ENCODE measurements at regions of chr1 and their contacts with region 1.

Region 1: GRCh38 chr1:65075123-65075976 is 72.7 kb upstream of the AK4 start:
- DNase-seq: peak in 1 of 3 donors; percentile 57
- ATAC-seq: peak; percentile 80 to 81
- H3K4me3 ChIP-seq: no peak overlapping the region
- H3K27ac ChIP-seq: no peak overlapping the region
- H3K4me1 ChIP-seq: no peaks in the 10 kb centered on the region
- H3K27me3 ChIP-seq: no peaks in the 10 kb centered on the region

Region 2: DNA sequence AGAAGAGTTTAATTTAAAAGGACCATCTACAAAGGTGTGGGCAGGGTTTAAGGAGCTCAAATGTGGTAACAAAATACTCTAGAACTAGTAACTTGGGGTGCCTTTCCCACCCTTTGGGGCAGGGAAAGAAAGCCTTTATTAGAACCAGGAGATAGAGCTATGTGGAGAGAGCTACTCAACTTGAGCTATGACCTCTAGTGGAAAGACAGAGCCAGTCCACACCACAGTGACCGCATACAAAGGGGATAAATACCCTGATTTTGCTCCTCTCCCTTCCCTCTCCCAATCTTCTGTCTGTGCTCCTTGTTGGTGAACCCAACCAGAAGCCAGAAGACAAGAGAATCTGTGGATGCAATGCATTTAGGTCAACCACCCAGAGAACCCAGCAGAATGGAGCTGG is 54.6 kb before region 1 on chr1:
- intact Hi-C with region 1: no loop called
- DNase-seq: no peak
- ATAC-seq: peak; percentile 57 to 71
- H3K4me3 ChIP-seq: no peak overlapping the region
- H3K27ac ChIP-seq: no peak overlapping the region
- H3K4me1 ChIP-seq: peaks cover 1% of the 10 kb centered on the region
- H3K27me3 ChIP-seq: no peaks in the 10 kb centered on the region

Region 3: GRCh38 chr1:65148548-65149350 is 73.4 kb after region 1 on chr1:
- intact Hi-C with region 1: loop called in 2 of 4 experiments (anchors 10 kb)
- DNase-seq: peak; percentile 60 to 82 (median 81)
- ATAC-seq: peak; percentile 80 to 82
- H3K4me3 ChIP-seq: peak overlapping the region; percentile 63
- H3K27ac ChIP-seq: peak overlapping the region; percentile 76
- H3K4me1 ChIP-seq: peaks cover 6% of the 10 kb centered on the region
- H3K27me3 ChIP-seq: no peaks in the 10 kb centered on the region